Lower leg skin (tissue), 4 donors: ENCODE measurements at regions of chr15 and their contacts with region 1.

Region 1: DNA sequence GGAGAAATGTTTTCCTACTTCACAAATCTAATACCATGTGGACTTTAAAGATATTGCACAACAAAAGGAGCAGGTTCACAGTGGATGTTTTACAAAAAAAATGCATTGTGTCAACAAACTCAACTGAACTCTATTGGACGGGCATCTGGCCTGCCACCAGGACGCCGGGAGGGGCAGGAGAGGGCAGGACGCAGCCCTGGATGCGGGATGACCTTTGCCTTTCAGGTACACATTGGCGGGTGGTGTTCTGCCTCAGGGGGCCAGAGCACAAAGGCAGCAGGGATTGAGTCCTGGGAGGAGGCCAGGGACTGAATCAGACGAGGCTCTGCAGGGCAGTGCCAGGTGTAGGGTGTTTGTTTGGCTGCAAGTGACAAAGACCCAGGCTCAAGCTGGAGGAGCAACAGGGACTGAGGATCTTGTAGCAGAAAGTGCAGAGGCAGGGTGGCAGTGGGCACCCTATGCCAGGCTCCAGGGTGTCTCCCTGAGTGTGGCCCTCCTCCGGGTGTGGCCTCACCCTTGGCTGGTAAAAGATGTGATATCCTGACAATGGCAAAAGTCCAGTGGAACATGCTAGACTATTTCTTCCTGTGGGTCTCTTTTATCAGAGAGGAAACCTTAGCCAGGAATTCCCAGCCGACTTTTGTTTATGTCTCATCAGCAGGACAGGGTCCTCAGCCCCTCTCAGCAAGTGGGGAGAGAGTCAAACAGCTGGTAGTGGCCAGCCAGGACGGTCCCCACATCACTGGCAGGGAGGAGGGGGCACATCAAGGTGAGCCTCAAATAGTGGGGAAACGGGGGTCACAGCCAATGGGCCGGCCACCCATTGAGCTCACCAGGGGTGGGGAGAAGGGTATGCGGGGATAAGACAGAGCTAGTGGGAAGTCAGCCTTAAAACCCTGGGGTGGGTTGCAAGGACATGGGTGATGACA is 29.7 kb upstream of the KLF13 start:
- DNase-seq: peak; percentile 23 to 86
- H3K4me3 ChIP-seq: no peak overlapping the region
- CTCF ChIP-seq: no peak
- POLR2A ChIP-seq: no peak

Region 2: DNA sequence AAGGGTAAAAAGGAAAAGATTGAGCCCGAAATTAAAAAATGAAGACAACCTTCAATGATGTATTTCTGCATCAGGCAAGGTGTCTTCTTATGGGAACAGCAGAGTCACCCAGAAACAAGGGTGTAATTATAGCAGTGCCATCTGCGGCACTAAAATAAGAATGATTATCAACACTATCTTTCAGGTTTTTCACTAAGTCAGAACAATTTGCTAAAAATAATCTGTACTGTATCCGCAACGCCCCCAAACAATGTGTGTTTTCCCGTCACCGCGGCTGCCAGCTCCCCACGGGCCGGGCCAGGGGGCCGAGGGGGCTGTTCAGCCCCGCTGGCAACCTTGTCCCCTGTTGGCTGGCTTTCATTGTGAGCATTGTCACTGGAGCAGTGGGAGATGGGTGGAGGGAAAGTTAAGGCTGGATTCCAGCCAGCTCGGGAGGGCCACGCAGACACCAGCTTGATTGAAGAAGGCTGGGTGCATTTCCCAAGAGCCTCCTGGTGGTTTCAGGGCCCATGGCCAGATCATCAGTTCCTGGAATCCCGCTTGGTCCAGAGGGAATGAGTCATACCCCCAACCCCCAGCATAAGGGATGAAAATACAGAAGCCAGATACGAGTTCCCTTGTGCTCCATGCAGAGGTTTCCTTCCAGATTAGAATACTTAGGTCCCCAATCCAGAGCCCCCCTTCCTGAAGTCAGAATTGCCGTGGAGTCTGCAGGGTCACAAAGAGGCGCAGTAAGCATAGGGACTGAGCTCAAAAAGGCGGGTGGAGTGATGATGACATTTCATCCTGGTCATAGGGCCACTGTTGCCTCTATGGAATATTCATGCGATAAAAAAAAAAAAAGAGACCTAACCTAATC is 60.5 kb before region 1 on chr15:
- intact Hi-C with region 1: loop called (anchors 10 kb)
- DNase-seq: peak; percentile 73 to 93
- H3K4me3 ChIP-seq: no peak overlapping the region
- CTCF ChIP-seq: no peak
- POLR2A ChIP-seq: no peak